ENCODE measurements at regions of chr2 and their contacts with region 1.

Region 1: DNA sequence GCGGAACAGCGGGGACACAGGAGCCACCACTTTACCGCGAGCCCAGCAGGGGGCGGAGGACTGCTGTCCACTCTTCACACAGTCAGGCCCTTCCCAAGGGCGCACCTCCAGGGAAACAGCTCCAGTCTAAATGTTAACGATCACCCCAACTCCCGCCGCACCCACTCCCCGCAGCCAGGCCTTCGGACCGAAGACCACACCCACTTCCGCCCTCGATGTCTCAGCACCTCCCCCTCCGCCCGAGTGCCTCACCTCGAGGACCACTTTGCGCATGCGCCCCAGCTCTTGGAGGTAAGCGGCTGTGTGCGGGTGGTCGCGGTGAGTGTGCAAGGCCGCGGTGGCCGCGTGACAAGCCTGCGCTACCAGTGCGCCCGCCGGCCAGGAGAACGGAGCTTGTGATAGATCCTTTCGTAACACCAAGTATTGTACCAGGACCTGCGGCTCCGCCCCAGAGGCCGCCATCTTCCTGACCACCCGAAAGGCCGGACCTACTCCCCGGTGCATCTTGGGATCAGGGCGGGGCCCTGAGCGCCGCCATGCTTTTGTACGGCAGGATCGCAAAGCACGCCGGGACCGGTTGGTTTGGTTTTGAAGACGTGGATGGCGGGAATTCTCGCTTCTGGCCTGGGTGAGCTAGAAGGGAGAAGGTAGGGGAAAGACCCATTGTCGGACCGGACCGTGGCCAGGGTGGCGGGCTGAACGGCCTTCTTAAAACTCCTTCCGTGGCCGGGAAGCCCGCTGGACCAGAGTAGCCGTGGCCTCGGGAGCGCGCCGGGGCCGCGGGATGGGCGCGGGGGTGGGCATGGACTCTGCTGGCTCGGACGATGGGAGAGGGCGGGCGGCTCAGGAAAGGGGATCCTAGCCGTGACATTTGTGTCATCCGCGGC is at the starts of genes CENPO and PTRHD1:
- DNase-seq: peak; percentile 98
- H3K4me3 ChIP-seq: peak within 1 kb of the TSS; percentile 57 to 81 (median 75)
- H3K27ac ChIP-seq: peak within 1 kb of the TSS; percentile 92 to 98 (median 97)
- H3K4me1 ChIP-seq: peaks cover 0 to 17% (median 13%) of the 10 kb centered on the region in 4 donors
- H3K27me3 ChIP-seq: no peaks in the 10 kb centered on the region
- CTCF ChIP-seq: peak in 3 of 4 experiments; percentile 58 to 70 (median 67)
- EP300 ChIP-seq: no peak
- POLR2A ChIP-seq: peak in 1 of 2 donors; percentile 48
- total RNA-seq, gene CENPO: 0.49 to 5.7 (median 1.7) TPM
- total RNA-seq, gene PTRHD1: 10.5 to 36.0 (median 14.2) TPM

Region 2: GRCh38 chr2:24123195-24123921 is 669.8 kb before region 1 on chr2 and contains the starts of genes FAM228B and PFN4:
- intact Hi-C with region 1: loop called (anchors 10 kb)
- DNase-seq: peak; percentile 95
- H3K4me3 ChIP-seq: peak within 1 kb of the TSS; percentile 46 to 68 (median 66)
- H3K27ac ChIP-seq: peak within 1 kb of the TSS; percentile 88 to 94 (median 92)
- H3K4me1 ChIP-seq: peaks cover 0 to 32% (median 15%) of the 10 kb centered on the region in 4 donors
- H3K27me3 ChIP-seq: no peaks in the 10 kb centered on the region
- CTCF ChIP-seq: no peak
- EP300 ChIP-seq: no peak
- POLR2A ChIP-seq: no peak
- total RNA-seq, gene FAM228B: 24.7 to 44.1 (median 37.2) TPM
- total RNA-seq, gene PFN4: 1.9 TPM in 1 of 4 donors, not detected in the others

Region 3: GRCh38 chr2:24490674-24491625 is 302.2 kb before region 1 on chr2 and contains the start of gene NCOA1:
- intact Hi-C with region 1: loop called (anchors 2 kb)
- DNase-seq: peak; percentile 95
- H3K4me3 ChIP-seq: peak within 1 kb of the TSS; percentile 87 to 96 (median 92)
- H3K27ac ChIP-seq: peak within 1 kb of the TSS; percentile 93 to 94 (median 94)
- H3K4me1 ChIP-seq: peaks cover 2 to 38% (median 30%) of the 10 kb centered on the region in 4 donors
- H3K27me3 ChIP-seq: no peaks in the 10 kb centered on the region
- CTCF ChIP-seq: no peak
- EP300 ChIP-seq: no peak
- POLR2A ChIP-seq: peak in 1 of 2 donors; percentile 47
- total RNA-seq, gene NCOA1: 49.2 to 61.7 (median 51.8) TPM

Region 4: GRCh38 chr2:24930768-24931167 is 137.7 kb after region 1 on chr2:
- intact Hi-C with region 1: no loop called
- DNase-seq: no peak
- H3K4me3 ChIP-seq: no peak overlapping the region
- H3K27ac ChIP-seq: no peak overlapping the region
- H3K4me1 ChIP-seq: peaks cover 0 to 12% (median 12%) of the 10 kb centered on the region in 4 donors
- H3K27me3 ChIP-seq: peaks cover 0 to under 1% (median 0%) of the 10 kb centered on the region in 3 donors
- CTCF ChIP-seq: no peak
- EP300 ChIP-seq: no peak
- POLR2A ChIP-seq: no peak

Region 5: GRCh38 chr2:25215948-25216679 is 423.0 kb after region 1 on chr2:
- intact Hi-C with region 1: no loop called
- DNase-seq: peak; percentile 85
- H3K4me3 ChIP-seq: peak overlapping the region; percentile 27 to 65 (median 53)
- H3K27ac ChIP-seq: peak overlapping the region; percentile 65 to 83 (median 76)
- H3K4me1 ChIP-seq: peaks cover 0 to 10% (median 7%) of the 10 kb centered on the region in 4 donors
- H3K27me3 ChIP-seq: no peaks in the 10 kb centered on the region
- CTCF ChIP-seq: no peak
- EP300 ChIP-seq: no peak
- POLR2A ChIP-seq: no peak

Measured in sigmoid colon (tissue), 7 donors.